ENCODE measurements at regions of chr5 and their contacts with region 1.

Region 1: DNA sequence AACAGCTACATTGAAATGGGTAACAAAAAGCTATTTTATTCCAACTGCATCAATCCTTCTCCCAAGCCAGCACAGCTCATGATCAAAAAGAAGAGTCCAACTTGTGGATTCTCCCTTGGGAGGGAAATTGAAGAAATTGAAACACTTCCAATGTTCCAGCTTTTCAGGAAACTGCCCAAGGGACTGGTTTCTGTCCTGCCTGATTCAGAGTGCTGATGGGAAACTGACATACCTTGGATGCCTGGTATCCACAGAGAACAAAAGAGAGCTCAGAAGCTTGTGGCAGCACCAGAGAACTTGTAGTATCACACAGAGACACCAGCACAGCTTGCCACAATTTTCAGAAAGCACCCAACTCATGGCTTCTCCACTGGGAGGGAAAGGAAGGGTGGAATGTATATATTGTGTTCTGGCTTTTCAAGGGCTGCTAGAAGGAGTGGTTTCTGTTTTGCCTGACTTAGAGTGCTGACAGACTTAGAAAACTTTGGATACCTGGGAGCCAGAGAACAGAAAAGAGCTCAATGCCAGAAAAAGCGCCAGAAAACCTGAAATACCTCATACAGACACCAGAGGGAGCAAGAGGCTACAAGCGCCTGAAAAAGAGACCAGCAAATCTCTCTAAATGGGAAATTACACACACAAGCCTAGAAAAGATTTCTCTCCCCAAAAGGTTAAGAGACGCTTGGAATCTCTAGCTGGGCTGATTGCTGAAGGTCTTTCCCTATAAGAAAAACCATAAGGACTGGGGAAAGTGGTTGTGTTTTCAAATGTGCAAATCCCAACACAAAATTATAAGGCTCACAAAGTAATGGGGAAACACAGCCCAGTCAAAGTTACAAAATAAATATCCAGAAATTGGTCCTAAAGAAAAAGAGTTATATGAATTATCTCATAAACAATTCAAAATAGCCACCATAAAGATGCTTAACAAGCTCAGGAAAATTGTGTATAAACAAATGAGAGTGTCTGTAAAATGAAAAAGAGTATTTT is 178.8 kb downstream of the SPOCK1 start:
- DNase-seq: no peak

Region 2: GRCh38 chr5:137360607-137361006 is 40.3 kb after region 1 on chr5:
- intact Hi-C with region 1: no loop called
- DNase-seq: no peak

Region 3: GRCh38 chr5:137498736-137499505 is 178.6 kb after region 1 on chr5 and contains the start of gene SPOCK1:
- intact Hi-C with region 1: loop called (anchors 1 kb)
- DNase-seq: no peak
- total RNA-seq, gene SPOCK1: 43.4 TPM

Region 4: DNA sequence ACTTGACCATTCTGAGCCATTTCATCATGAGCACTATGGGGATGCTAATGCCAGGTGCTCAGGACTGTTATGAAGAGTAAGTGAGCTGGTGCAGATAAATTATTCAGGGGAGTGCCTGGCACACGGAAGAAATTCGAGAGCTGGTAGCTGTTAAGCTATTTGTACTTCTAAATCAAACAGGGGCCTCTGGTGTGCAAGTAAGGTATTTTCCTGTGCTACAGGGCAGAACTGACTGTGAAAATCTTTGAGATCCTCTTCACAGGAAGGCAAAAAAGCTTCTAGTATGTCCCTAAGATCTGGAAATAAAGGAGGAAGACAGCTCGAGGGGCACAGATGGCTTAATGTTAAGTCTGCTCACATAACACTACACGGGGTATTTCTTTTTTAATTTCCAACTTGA is 285.1 kb after region 1 on chr5:
- intact Hi-C with region 1: loop called (anchors 10 kb)
- DNase-seq: no peak